Breast epithelium (tissue), 4 donors: ENCODE measurements at regions of chr9 and their contacts with region 1.

Region 1: GRCh38 chr9:91536211-91536691 is 112.6 kb upstream of the NFIL3 start:
- DNase-seq: no peak
- H3K4me3 ChIP-seq: no peak overlapping the region
- H3K27ac ChIP-seq: no peak overlapping the region
- H3K4me1 ChIP-seq: no peaks in the 10 kb centered on the region
- H3K27me3 ChIP-seq: no peaks in the 10 kb centered on the region
- CTCF ChIP-seq: no peak
- POLR2A ChIP-seq: no peak

Region 2: DNA sequence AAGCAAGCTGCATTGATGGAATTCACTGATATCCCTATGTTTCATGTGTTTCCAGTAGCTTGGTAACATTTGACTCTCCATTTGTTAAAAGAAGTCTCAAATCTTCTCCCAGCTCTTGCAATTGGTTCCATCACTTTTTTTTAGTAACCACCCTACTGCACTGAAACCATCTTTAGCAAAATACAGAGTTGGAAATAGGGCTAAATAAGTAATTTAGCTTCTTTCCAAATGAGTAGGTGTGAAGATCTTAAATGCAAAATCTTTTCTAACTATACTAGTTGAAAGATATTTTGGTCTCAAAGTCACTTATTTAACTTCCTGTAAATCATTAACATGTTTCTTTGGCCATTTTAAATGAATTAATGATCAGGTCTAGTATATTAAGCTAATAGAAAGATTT is 1031.8 kb before region 1 on chr9:
- intact Hi-C with region 1: loop called (anchors 10 kb)
- DNase-seq: no peak
- H3K4me3 ChIP-seq: no peak overlapping the region
- H3K27ac ChIP-seq: no peak overlapping the region
- H3K4me1 ChIP-seq: no peaks in the 10 kb centered on the region
- H3K27me3 ChIP-seq: no peaks in the 10 kb centered on the region
- CTCF ChIP-seq: no peak
- POLR2A ChIP-seq: no peak